ENCODE measurements at regions of chr15 and their contacts with region 1.

Region 1: DNA sequence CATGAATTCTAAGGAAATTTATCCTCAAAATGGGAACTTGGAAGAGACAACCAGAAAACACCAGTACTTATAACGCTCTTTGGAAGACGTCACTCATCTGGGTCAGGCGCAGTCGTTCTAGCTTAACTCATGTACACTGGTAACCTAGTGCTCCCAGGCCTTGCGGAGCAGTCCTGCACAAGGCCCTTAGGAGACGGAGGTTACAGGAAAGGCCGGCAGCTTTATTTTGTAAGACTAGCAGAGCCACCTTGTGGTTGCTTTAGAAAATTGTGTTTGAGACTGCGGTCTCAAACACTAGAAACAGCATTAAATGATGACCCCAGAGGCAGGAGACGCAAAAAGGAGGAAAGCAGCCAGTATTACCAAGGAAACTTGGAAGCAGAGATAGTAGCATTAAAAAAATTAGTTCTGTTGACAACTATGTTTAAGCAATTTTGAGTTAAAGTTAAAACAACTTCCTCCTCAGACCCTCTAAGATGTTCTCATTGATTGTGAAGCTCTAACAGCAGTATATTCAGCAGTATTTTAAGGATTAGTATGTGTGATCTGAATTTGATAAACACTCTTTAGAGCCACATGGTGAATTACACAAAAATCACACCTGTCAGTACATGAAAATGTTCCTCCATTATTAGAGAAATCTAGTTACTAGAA is 141.9 kb upstream of the C2CD4B start:
- DNase-seq: peak; percentile 72
- H3K4me3 ChIP-seq: peak overlapping the region in 1 of 2 experiments; percentile 17; a peak in 1 of 4 replicates
- H3K27ac ChIP-seq: peak overlapping the region; percentile 28 to 61; a peak in 2 of 4 replicates
- H3K4me1 ChIP-seq: peaks cover 8 to 15% of the 10 kb centered on the region in 2 experiments
- H3K27me3 ChIP-seq: no peaks in the 10 kb centered on the region
- CTCF ChIP-seq: peak; percentile 78
- EP300 ChIP-seq: no peak
- RAD21 ChIP-seq: peak; percentile 92

Region 2: DNA sequence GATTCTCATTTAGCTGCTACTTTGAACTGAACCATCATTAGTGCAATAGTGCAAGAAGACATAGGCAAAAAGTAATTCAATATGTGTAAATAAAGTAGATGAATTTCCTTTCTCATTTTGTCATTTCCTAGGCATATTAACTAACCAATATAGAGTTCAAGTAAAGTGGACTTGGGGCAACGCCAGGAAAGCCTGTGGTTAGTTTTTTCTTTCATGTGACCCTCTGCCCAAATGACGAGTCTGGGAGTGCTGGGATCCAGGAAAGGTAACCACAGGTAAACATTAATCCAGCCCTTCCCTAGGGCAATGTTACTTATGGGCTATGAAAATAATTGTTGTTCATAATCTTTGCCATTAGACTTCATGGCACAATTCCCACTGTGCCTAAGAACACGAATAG is 427.8 kb before region 1 on chr15:
- CTCF ChIA-PET with region 1: interaction called, 10 read pairs
- POLR2A ChIA-PET with region 1: no interaction called
- DNase-seq: no peak
- H3K4me3 ChIP-seq: no peak overlapping the region
- H3K27ac ChIP-seq: no peak overlapping the region
- H3K4me1 ChIP-seq: no peaks in the 10 kb centered on the region
- H3K27me3 ChIP-seq: no peaks in the 10 kb centered on the region
- CTCF ChIP-seq: no peak
- EP300 ChIP-seq: no peak
- RAD21 ChIP-seq: no peak

Region 3: DNA sequence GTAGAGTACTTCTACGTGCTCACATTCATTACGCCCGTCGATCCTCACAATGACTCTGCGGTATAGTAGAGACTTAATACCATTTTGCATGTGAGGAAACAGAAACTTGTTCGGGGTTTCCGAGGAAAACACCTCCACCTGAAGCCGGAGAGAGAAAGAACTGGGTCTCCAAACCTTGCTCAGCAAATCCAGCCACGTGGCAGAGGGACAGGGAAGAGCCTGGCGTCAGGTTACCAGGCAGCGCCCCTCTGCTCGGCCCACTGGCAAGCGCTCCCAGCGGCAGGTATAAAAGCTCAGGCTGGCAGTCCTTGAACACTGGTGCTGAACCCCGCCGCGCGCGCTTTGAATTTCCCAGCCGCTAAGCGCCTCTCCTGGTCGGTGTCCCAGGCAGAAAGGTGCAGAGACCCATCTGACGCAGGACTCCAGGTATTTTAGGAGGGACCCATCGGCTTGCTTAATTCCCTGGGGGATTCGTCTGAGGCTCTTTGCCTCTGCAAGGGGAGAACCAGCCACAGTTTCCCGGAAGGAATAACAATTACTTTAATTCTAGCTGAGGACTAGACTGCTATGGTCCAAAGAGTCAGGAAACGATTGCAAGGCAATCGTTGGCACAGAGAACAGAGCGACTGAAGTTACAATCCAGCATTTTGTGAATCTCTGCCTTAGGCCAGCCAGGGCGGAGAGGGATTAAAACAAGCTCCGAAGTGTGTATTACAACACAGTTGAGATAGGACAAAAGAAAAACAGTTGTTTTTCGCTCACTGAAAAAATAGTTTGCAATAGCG is 240.1 kb before region 1 on chr15 and contains the start of gene C2CD4A:
- CTCF ChIA-PET with region 1: interaction called, 27 read pairs
- POLR2A ChIA-PET with region 1: no interaction called
- DNase-seq: no peak
- H3K4me3 ChIP-seq: peak within 1 kb of the TSS in 1 of 2 experiments; percentile 56; a peak in 2 of 4 replicates
- H3K27ac ChIP-seq: no peak within 1 kb of the TSS
- H3K4me1 ChIP-seq: no peaks in the 10 kb centered on the region; a peak in 1 of 4 replicates
- H3K27me3 ChIP-seq: no peaks in the 10 kb centered on the region
- CTCF ChIP-seq: no peak
- EP300 ChIP-seq: no peak
- RAD21 ChIP-seq: no peak
- polyA plus RNA-seq, gene C2CD4A: not detected in 2 replicates

Region 4: GRCh38 chr15:62165104-62165792 is 141.7 kb before region 1 on chr15 and contains the start of gene C2CD4B:
- CTCF ChIA-PET with region 1: interaction called, 10 read pairs
- POLR2A ChIA-PET with region 1: no interaction called
- DNase-seq: peak; percentile 58
- H3K4me3 ChIP-seq: peak within 1 kb of the TSS; percentile 35 to 42; a peak in 3 of 4 replicates
- H3K27ac ChIP-seq: no peak within 1 kb of the TSS
- H3K4me1 ChIP-seq: no peaks in the 10 kb centered on the region; a peak in 1 of 4 replicates
- H3K27me3 ChIP-seq: peaks cover 32% of the 10 kb centered on the region; the same call in 1 of the 2 replicates
- CTCF ChIP-seq: no peak
- EP300 ChIP-seq: no peak
- RAD21 ChIP-seq: no peak
- polyA plus RNA-seq, gene C2CD4B: not detected in 2 replicates

Region 5: GRCh38 chr15:62277816-62278394 is 29.1 kb before region 1 on chr15:
- CTCF ChIA-PET with region 1: interaction called, 14 read pairs
- POLR2A ChIA-PET with region 1: no interaction called
- DNase-seq: no peak
- H3K4me3 ChIP-seq: no peak overlapping the region
- H3K27ac ChIP-seq: no peak overlapping the region
- H3K4me1 ChIP-seq: no peaks in the 10 kb centered on the region; a peak in 1 of 4 replicates
- H3K27me3 ChIP-seq: 0 out of 2 replicates have a peak, but pooled peaks cover 5% of the 10 kb centered on the region
- CTCF ChIP-seq: no peak
- EP300 ChIP-seq: no peak
- RAD21 ChIP-seq: peak; percentile 23; the same call in 1 of the 2 replicates

Region 6: GRCh38 chr15:62296756-62297507 is 10.0 kb before region 1 on chr15:
- CTCF ChIA-PET with region 1: interaction called, 23 read pairs
- POLR2A ChIA-PET with region 1: no interaction called
- DNase-seq: no peak
- H3K4me3 ChIP-seq: no peak overlapping the region
- H3K27ac ChIP-seq: no peak overlapping the region
- H3K4me1 ChIP-seq: peaks cover 0 to 4% of the 10 kb centered on the region in 2 experiments; a peak in 2 of 4 replicates
- H3K27me3 ChIP-seq: no peaks in the 10 kb centered on the region
- CTCF ChIP-seq: no peak
- EP300 ChIP-seq: no peak
- RAD21 ChIP-seq: no peak

Region 7: GRCh38 chr15:62344806-62345539 is 38.0 kb after region 1 on chr15:
- CTCF ChIA-PET with region 1: interaction called, 11 read pairs
- POLR2A ChIA-PET with region 1: no interaction called
- DNase-seq: peak; percentile 76
- H3K4me3 ChIP-seq: no peak overlapping the region; a peak in 1 of 4 replicates
- H3K27ac ChIP-seq: no peak overlapping the region
- H3K4me1 ChIP-seq: no peaks in the 10 kb centered on the region
- H3K27me3 ChIP-seq: no peaks in the 10 kb centered on the region
- CTCF ChIP-seq: peak; percentile 61
- EP300 ChIP-seq: no peak
- RAD21 ChIP-seq: peak; percentile 64